ENCODE measurements at regions of chr17 and their contacts with region 1.

Region 1: DNA sequence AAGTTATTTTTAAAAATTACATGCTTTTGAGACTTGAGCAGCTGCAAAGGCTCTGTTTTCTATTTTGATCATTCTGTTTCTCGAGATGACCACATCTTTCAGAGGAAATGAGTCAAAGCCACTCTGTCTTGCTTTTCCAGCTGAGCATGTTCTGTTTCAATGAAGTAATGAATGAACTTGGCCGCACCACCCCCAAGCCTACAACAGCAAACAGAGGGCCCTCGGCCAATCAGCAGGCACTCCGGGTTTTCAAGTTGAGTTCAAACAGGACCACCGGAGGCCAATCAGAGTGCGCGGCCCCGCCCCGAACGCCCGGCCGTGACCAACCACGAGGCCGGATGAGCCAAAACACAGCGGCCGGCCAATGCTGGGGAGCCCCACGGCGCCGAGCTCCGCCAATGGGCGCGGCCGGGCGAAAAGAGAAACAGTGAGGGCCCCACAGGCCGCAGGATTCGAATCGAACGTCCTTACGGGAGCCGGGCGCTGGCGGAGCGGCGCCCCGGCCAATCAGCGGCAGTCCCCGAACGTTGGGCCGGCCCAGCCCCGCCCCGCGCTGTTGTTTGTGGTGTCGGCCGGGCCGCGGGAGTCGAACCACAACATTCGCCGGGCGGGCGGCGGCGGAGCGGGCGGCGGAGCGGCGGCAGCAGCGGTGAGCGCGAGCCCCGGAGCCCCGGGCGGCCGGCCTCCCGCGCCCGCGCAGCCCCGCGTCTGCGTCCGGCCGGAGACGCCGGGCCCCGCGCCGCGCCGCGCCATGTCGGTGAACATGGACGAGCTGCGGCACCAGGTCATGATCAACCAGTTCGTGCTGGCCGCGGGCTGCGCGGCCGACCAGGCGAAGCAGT is at the start of gene UBALD2:
- DNase-seq: peak; percentile 93
- CTCF ChIP-seq: no peak

Region 2: DNA sequence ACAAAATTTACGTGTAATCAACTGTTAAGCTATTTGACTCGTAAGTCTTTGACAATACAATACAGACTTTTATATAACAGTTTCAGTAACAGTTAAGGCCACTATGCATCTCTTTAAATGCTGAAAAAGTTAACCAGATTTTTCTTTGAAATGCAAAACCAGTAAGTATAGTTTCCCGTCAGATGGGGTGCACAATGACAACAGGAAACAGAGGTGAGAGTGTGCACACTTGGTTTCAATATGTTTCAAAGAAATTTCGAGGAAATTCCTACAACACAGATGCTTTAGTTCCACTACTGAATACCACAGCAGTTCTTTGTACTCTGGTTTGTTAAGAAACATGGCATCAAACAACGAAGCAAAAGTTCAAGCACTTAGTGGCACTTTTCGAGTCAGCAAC is 73.1 kb before region 1 on chr17:
- CTCF ChIA-PET with region 1: interaction called, 4 read pairs
- POLR2A ChIA-PET with region 1: interaction called, 15 read pairs
- DNase-seq: peak; percentile 62
- CTCF ChIP-seq: no peak

Region 3: DNA sequence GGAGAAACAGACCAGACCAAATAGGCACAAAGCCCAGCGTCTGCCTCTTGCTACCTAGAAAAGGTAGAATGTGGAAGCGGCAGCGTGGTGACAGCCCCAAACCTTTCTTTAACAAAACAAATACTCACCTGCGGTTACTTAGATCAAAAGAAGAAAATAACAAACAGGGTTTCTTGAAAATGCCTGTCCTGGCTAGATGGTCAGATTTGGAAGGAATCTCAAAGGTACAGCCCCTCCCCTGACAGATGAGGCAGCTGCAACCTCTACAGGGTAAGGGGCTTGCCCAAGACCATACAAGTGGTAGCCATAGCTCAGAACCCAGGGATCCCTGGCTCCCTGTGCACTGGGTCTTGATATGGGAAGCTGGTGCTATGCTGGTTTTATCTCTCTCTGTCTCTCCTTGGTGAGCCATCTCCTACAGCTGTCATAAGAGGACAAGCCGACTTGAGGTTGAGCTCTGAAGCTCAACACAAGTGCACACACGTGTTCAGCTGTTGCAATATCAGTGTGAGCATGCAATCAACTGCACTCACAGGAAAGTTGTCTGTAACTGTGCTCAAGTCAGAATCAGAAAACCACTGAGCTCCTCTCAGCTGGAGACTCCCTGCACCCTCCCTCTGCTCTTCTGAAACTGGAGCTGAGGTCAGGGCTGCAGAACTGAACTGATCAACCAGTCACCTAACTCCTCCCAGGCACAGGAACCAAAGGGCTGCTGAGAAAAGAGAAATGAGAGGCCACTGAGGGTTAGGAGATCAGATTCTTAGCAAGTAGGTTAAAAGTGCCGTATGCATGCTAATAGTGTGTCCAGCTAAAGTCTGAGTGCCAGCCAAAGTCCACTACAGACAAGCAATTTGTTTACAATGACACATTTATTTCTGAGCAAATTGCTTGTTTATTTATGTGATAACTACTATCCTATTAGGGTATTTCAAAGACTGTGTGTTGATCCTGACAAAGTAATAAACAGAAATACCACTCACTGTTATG is 18.6 kb before region 1 on chr17:
- CTCF ChIA-PET with region 1: interaction called, 117 read pairs
- POLR2A ChIA-PET with region 1: interaction called, 24 read pairs
- DNase-seq: peak; percentile 87
- CTCF ChIP-seq: no peak

Region 4: GRCh38 chr17:76296186-76296585 is 31.2 kb after region 1 on chr17:
- CTCF ChIA-PET with region 1: no interaction called
- POLR2A ChIA-PET with region 1: no interaction called
- DNase-seq: no peak
- CTCF ChIP-seq: no peak

Measured in GM10248 (cell line).